ENCODE measurements at regions of chr9 and their contacts with region 1.

Region 1: GRCh38 chr9:15211160-15211814 is 95.7 kb downstream of the TTC39B start:
- DNase-seq: peak; percentile 69
- ATAC-seq: peak; percentile 54
- H3K4me3 ChIP-seq: no peak overlapping the region
- H3K4me3 Mint-ChIP-seq: no peak overlapping the region
- H3K27ac ChIP-seq: no peak overlapping the region
- H3K27ac Mint-ChIP-seq: no peak overlapping the region
- H3K4me1 ChIP-seq: no peaks in the 10 kb centered on the region
- H3K4me1 Mint-ChIP-seq: no peaks in the 10 kb centered on the region
- H3K27me3 ChIP-seq: no peaks in the 10 kb centered on the region
- H3K27me3 Mint-ChIP-seq: no peaks in the 10 kb centered on the region
- CTCF ChIP-seq: peak; percentile 96

Region 2: DNA sequence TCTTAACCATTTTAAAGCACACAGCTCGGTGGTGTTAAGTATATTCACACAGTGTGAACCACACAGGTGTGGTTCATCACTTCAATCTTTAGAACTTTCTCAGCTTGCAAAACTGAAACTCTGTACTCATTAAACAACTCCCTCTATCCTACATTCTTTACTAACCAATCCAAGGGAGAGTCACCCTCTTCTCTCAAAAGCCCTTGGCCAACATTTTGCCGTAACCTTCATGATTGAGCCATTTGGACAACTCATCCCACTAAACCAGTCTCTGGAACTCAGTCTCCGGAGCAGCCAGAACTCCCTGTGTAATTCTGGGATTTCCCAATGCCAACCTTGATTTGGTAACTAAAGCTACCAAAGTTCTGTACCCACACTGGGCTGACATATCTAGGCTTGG is 11.0 kb after region 1 on chr9:
- CTCF ChIA-PET with region 1: interaction called, 13 read pairs
- POLR2A ChIA-PET with region 1: no interaction called
- intact Hi-C with region 1: no loop called
- DNase-seq: no peak
- ATAC-seq: no peak
- H3K4me3 ChIP-seq: no peak overlapping the region
- H3K4me3 Mint-ChIP-seq: no peak overlapping the region
- H3K27ac ChIP-seq: no peak overlapping the region
- H3K27ac Mint-ChIP-seq: no peak overlapping the region
- H3K4me1 ChIP-seq: peaks cover 5 to 6% of the 10 kb centered on the region in 2 donors
- H3K4me1 Mint-ChIP-seq: peaks cover 14% of the 10 kb centered on the region
- H3K27me3 ChIP-seq: no peaks in the 10 kb centered on the region
- H3K27me3 Mint-ChIP-seq: no peaks in the 10 kb centered on the region
- CTCF ChIP-seq: no peak

Region 3: DNA sequence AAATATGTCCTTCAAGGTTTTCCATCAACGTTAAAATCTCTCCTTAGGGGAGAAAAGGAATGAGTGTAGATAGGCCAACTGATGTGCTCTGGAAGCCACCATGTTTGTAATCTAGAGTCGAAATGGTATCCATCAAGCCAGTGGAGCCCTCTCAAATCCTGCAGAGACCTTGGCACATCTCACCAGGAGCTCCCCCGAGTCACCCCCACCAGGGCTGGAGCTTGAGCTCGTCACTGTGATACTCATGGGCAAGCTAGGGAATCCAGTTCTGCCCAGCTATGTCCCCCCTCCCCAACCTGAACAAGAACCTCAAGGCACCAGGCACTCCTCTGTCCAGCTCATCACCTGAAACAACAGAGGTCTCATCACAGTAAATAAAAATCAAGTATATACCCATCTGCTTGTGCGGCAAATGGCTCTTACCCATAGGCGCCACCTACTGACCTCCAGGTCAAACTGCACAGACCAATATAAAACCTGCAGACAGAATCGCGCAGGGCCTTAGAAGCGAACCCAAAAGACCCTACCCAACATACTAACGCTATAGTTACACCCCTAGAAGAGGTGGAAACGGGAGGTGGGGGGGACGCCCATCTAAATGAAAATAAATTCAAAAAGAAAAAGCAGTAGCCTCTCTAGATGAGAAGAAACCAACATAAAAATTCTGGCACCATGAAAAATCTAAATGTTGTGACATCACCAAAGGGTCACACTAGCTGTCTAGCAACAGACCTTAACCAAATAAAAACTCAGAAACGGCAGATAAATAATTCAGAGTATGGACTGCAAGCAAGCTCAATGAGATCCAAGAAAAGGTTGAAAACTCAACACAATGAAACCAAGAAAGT is 20.7 kb after region 1 on chr9:
- CTCF ChIA-PET with region 1: interaction called, 11 read pairs
- POLR2A ChIA-PET with region 1: no interaction called
- intact Hi-C with region 1: no loop called
- DNase-seq: peak; percentile 35
- ATAC-seq: peak; percentile 61
- H3K4me3 ChIP-seq: no peak overlapping the region
- H3K4me3 Mint-ChIP-seq: no peak overlapping the region
- H3K27ac ChIP-seq: no peak overlapping the region
- H3K27ac Mint-ChIP-seq: no peak overlapping the region
- H3K4me1 ChIP-seq: peaks cover 3 to 5% of the 10 kb centered on the region in 2 donors
- H3K4me1 Mint-ChIP-seq: peaks cover 15% of the 10 kb centered on the region
- H3K27me3 ChIP-seq: no peaks in the 10 kb centered on the region
- H3K27me3 Mint-ChIP-seq: no peaks in the 10 kb centered on the region
- CTCF ChIP-seq: peak; percentile 65

Region 4: GRCh38 chr9:15268317-15268716 is 57.0 kb after region 1 on chr9:
- CTCF ChIA-PET with region 1: no interaction called
- POLR2A ChIA-PET with region 1: no interaction called
- intact Hi-C with region 1: no loop called
- DNase-seq: no peak
- ATAC-seq: no peak
- H3K4me3 ChIP-seq: no peak overlapping the region
- H3K4me3 Mint-ChIP-seq: no peak overlapping the region
- H3K27ac ChIP-seq: no peak overlapping the region
- H3K27ac Mint-ChIP-seq: no peak overlapping the region
- H3K4me1 ChIP-seq: no peaks in the 10 kb centered on the region
- H3K4me1 Mint-ChIP-seq: peaks cover 6% of the 10 kb centered on the region
- H3K27me3 ChIP-seq: no peaks in the 10 kb centered on the region
- H3K27me3 Mint-ChIP-seq: no peaks in the 10 kb centered on the region
- CTCF ChIP-seq: no peak

Region 5: GRCh38 chr9:15357050-15357653 is 145.9 kb after region 1 on chr9:
- CTCF ChIA-PET with region 1: interaction called, 6 read pairs
- POLR2A ChIA-PET with region 1: no interaction called
- intact Hi-C with region 1: loop called (anchors 5 kb)
- DNase-seq: peak; percentile 76
- ATAC-seq: peak; percentile 78
- H3K4me3 ChIP-seq: no peak overlapping the region
- H3K4me3 Mint-ChIP-seq: no peak overlapping the region
- H3K27ac ChIP-seq: no peak overlapping the region
- H3K27ac Mint-ChIP-seq: no peak overlapping the region
- H3K4me1 ChIP-seq: peaks cover 0 to 8% of the 10 kb centered on the region in 2 donors
- H3K4me1 Mint-ChIP-seq: peaks cover 7% of the 10 kb centered on the region
- H3K27me3 ChIP-seq: no peaks in the 10 kb centered on the region
- H3K27me3 Mint-ChIP-seq: no peaks in the 10 kb centered on the region
- CTCF ChIP-seq: peak; percentile 44

Region 6: GRCh38 chr9:15642369-15642962 is 431.2 kb after region 1 on chr9:
- CTCF ChIA-PET with region 1: interaction called, 3 read pairs
- POLR2A ChIA-PET with region 1: no interaction called
- intact Hi-C with region 1: loop called (anchors 2 kb)
- DNase-seq: peak; percentile 31
- ATAC-seq: no peak
- H3K4me3 ChIP-seq: no peak overlapping the region
- H3K4me3 Mint-ChIP-seq: no peak overlapping the region
- H3K27ac ChIP-seq: no peak overlapping the region
- H3K27ac Mint-ChIP-seq: no peak overlapping the region
- H3K4me1 ChIP-seq: no peaks in the 10 kb centered on the region
- H3K4me1 Mint-ChIP-seq: no peaks in the 10 kb centered on the region
- H3K27me3 ChIP-seq: no peaks in the 10 kb centered on the region
- H3K27me3 Mint-ChIP-seq: no peaks in the 10 kb centered on the region
- CTCF ChIP-seq: peak; percentile 70